Uterus (tissue), 4 donors: ENCODE measurements at regions of chr13 and their contacts with region 1.

Region 1: DNA sequence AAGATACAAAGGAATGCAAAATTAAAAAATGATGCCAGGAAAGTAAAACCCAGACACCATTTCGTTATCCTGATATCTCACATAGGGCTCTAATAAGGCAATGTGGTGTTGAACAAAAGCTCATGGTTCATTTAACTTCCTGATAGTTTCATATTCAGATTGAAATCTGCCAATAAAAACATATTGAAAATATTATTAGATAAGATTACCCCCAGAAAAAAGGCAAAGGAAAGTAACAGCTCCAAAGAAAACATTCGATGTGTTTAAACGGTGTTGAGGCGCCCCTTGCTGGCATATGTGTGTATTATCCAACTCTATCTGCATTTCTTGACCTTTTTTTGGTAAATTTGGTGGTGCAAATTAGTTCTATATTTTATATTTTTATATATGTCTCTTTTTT is 75.9 kb downstream of the ESD start:
- DNase-seq: peak; percentile 51 to 64
- H3K4me3 ChIP-seq: no peak overlapping the region
- H3K27ac ChIP-seq: peak overlapping the region; percentile 14 to 23
- H3K4me1 ChIP-seq: peaks cover 0 to 6% of the 10 kb centered on the region in 2 donors
- H3K27me3 ChIP-seq: no peaks in the 10 kb centered on the region
- CTCF ChIP-seq: peak; percentile 69 to 86 (median 76)
- POLR2A ChIP-seq: no peak

Region 2: GRCh38 chr13:46492946-46493345 is 228.1 kb before region 1 on chr13:
- intact Hi-C with region 1: loop called (anchors 5 kb)
- DNase-seq: no peak
- H3K4me3 ChIP-seq: no peak overlapping the region
- H3K27ac ChIP-seq: no peak overlapping the region
- H3K4me1 ChIP-seq: no peaks in the 10 kb centered on the region
- H3K27me3 ChIP-seq: no peaks in the 10 kb centered on the region
- CTCF ChIP-seq: peak; percentile 59 to 75 (median 66)
- POLR2A ChIP-seq: no peak

Region 3: GRCh38 chr13:46553886-46554858 is 166.9 kb before region 1 on chr13:
- intact Hi-C with region 1: loop called (anchors 5 kb)
- DNase-seq: peak; percentile 62 to 67
- H3K4me3 ChIP-seq: peak overlapping the region; percentile 98 to 99
- H3K27ac ChIP-seq: peak overlapping the region; percentile 98 to 99
- H3K4me1 ChIP-seq: peaks cover 0 to 7% of the 10 kb centered on the region in 2 donors
- H3K27me3 ChIP-seq: no peaks in the 10 kb centered on the region
- CTCF ChIP-seq: peak in 2 of 4 experiments; percentile 22 to 36
- POLR2A ChIP-seq: peak; percentile 20 to 24